Posterior cingulate gyrus (tissue), 11 donors: ENCODE measurements at regions of chr1 and their contacts with region 1.

Region 1: GRCh38 chr1:84753516-84754385 is 63.5 kb upstream of the SSX2IP start:
- DNase-seq: peak; percentile 66 to 97 (median 84)

Region 2: GRCh38 chr1:84442256-84442655 is 311.5 kb before region 1 on chr1:
- intact Hi-C with region 1: loop called (anchors 2 kb)
- DNase-seq: no peak

Region 3: GRCh38 chr1:84689514-84690396 is 64.0 kb before region 1 on chr1:
- intact Hi-C with region 1: loop called (anchors 10 kb)
- DNase-seq: peak; percentile 59 to 95 (median 72)